Natural killer cell (primary cell): ENCODE measurements at regions of chr2 and their contacts with region 1.

Region 1: GRCh38 chr2:37389989-37390765 is 45.7 kb downstream of the QPCT start:
- DNase-seq: peak; percentile 40 to 88
- ATAC-seq: peak; percentile 85 to 93 (median 88)
- H3K4me3 ChIP-seq: no peak overlapping the region
- H3K4me3 Mint-ChIP-seq: no peak overlapping the region
- H3K27ac ChIP-seq: peak overlapping the region; percentile 49
- H3K27ac Mint-ChIP-seq: no peak overlapping the region
- H3K4me1 ChIP-seq: peaks cover 20% of the 10 kb centered on the region
- H3K4me1 Mint-ChIP-seq: no peaks in the 10 kb centered on the region
- H3K27me3 ChIP-seq: no peaks in the 10 kb centered on the region
- H3K27me3 Mint-ChIP-seq: peaks cover 0 to 1% of the 10 kb centered on the region in 2 donors
- CTCF ChIP-seq: no peak

Region 2: GRCh38 chr2:37324786-37325624 is 65.2 kb before region 1 on chr2 and contains the start of gene PRKD3:
- intact Hi-C with region 1: loop called (anchors 2 kb)
- DNase-seq: peak; percentile 69 to 75
- ATAC-seq: peak; percentile 63 to 83 (median 76)
- H3K4me3 ChIP-seq: peak within 1 kb of the TSS; percentile 82
- H3K4me3 Mint-ChIP-seq: peak within 1 kb of the TSS; percentile 97
- H3K27ac ChIP-seq: peak within 1 kb of the TSS; percentile 86
- H3K27ac Mint-ChIP-seq: peak within 1 kb of the TSS; percentile 96
- H3K4me1 ChIP-seq: peaks cover 20% of the 10 kb centered on the region
- H3K4me1 Mint-ChIP-seq: peaks cover 28 to 32% of the 10 kb centered on the region in 2 donors
- H3K27me3 ChIP-seq: peaks cover 3% of the 10 kb centered on the region
- H3K27me3 Mint-ChIP-seq: peaks cover 10 to 19% of the 10 kb centered on the region in 2 donors
- CTCF ChIP-seq: no peak
- total RNA-seq, gene PRKD3: 64.4 to 76.2 (median 65.1) TPM

Region 3: DNA sequence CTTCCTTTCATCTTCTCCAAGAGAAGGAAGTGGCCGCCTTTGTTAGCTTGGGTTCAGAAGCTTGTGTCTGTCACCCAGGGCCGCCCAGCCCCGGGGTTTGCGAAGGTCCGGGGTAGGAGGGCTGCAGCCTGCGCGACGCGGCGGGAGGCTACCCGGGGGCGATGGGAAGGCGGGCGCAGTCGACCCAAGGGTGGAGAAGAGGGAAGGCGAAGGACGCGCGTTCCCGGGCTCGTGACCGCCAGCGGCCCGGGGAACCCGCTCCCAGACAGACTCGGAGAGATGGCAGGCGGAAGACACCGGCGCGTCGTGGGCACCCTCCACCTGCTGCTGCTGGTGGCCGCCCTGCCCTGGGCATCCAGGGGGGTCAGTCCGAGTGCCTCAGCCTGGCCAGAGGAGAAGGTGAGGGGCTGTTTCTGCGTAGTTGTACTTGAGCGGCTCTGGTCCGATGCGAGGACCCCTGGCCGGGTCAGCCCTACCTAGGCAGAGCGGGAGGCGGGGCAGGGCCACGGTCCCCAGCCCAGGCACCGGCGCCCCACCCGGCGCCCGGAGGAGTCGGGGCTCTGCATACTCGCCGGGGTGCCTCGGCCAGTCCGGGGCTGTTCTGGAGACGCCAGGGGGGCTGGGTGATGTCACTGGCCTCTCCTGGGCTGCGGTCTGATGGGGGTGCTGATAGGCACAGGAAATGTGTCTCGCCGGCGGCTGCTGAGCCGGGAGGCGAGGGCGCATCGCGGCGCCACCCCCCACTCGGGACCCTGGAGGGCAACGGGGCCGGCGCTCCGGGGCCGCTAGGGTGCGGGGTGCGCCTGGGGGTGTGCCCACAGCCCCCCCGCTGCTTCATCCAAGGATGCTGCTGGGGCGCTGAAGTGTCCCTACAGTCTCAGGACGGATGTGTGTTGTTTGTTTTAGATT is 45.5 kb before region 1 on chr2 and contains the start of gene QPCT:
- intact Hi-C with region 1: loop called (anchors 1 kb)
- DNase-seq: peak; percentile 63 to 80
- ATAC-seq: peak; percentile 91 to 94 (median 93)
- H3K4me3 ChIP-seq: peak within 1 kb of the TSS; percentile 22
- H3K4me3 Mint-ChIP-seq: peak within 1 kb of the TSS; percentile 87
- H3K27ac ChIP-seq: no peak within 1 kb of the TSS
- H3K27ac Mint-ChIP-seq: peak within 1 kb of the TSS; percentile 23 to 80
- H3K4me1 ChIP-seq: peaks cover 15% of the 10 kb centered on the region
- H3K4me1 Mint-ChIP-seq: peaks cover 10 to 11% of the 10 kb centered on the region in 2 donors
- H3K27me3 ChIP-seq: peaks cover 4% of the 10 kb centered on the region
- H3K27me3 Mint-ChIP-seq: peaks cover 21 to 49% of the 10 kb centered on the region in 2 donors
- CTCF ChIP-seq: no peak
- total RNA-seq, gene QPCT: 0.38 to 2.1 (median 2.1) TPM